ENCODE measurements at regions of chr1 and their contacts with region 1.

Region 1: DNA sequence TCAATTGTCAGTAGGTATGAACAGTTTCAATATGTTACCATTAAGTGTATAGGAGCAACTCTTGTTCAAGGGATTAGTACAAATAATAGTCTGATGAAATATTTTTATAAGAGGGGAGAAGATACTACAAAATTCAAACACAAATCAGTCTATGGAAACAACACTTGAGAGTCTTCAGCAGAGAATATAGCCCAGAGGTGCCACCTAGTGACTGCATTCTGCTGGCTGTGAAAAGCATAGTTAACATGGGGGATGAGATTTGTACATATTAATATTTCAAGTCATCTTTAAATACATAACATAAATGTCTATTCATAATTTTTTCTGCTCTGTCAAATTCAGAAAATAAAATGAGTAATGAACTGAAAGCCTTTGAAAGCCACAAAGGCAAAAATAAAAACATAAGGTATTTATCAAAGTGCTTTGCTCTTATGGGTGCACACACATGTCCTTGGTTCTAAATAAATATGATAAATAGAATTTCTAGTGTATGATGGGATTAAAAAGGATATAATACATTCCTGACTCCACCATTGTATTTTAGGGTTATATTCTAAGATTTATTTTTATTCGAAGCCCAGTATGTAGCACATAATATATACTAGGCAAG is 440.9 kb upstream of the ZRANB2 start:
- DNase-seq: no peak

Region 2: DNA sequence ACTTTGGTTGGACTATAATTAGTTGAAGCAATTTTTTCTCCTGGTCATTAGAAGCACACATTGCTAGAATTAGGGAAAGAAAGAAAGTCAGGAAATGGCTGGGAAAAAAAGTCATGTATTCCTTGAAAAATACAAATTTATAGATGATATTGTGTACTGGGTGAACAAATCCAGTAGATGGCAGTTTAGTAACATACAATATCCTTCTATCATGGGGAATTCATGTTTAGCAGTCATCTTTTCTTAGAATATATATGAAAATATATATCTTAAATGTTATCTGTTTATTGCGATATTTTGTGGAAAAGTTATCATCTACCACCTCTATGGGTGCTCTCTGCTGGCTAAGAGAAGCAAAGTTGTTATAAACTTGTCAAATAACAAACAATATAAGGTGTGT is 427.8 kb before region 1 on chr1:
- intact Hi-C with region 1: loop called (anchors 10 kb)
- DNase-seq: no peak

Region 3: GRCh38 chr1:71196685-71197084 is 325.1 kb before region 1 on chr1:
- intact Hi-C with region 1: loop called (anchors 5 kb)
- DNase-seq: no peak

Measured in cardiac septum (tissue), 1 donor.